ENCODE measurements at regions of chr6 and their contacts with region 1.

Region 1: GRCh38 chr6:112180095-112180820 is 74.1 kb downstream of the LAMA4 start:
- DNase-seq: peak; percentile 92
- ATAC-seq: peak; percentile 66; the same call in 1 of the 2 replicates
- H3K4me3 ChIP-seq: no peak overlapping the region
- H3K27ac ChIP-seq: no peak overlapping the region
- H3K4me1 ChIP-seq: peaks cover 3% of the 10 kb centered on the region; the same call in 1 of the 2 replicates
- H3K27me3 ChIP-seq: no peaks in the 10 kb centered on the region
- CTCF ChIP-seq: peak; percentile 79
- POLR2A ChIP-seq: no peak
- RAD21 ChIP-seq: peak; percentile 91

Region 2: DNA sequence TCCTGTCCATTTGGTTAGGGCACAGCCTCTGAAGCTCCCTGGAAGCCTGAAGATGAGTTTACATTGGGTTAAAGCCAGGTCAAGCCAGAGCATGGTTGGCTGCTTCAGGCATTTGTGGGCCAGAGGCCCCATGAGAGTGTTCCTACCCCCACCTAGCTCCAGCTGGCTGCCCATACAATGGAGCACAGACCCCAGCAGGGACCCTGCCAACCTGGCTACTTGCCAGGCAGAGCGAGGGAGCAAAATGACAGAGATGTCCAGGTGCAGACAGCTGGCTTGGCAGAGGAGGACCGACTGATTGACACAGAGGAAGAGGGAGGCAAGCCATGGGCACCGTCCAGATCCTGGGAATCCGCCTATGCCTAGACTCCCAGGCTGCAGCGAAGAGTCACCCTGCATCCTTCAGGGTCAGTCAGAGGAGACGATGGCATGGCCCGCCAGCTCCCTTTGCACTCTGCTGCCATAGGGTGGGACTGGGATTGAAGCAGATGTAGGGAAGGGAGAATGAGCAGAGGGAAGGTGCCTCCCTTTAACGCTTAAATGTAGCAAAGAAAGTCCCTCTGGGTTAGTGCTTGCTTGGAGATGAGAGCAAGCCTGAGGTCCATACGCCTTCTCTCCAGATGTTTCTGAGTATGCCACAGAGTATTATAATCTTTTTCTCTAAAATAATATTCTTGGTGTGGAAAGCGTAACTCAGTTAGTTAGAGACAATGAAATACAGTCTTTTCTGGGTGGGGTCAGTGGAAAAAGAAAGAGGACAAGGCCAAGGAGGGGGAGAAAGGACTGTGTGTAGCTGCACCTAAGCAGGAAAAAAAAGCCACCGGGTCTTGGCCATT is 229.4 kb before region 1 on chr6:
- CTCF ChIA-PET with region 1: no interaction called
- POLR2A ChIA-PET with region 1: no interaction called
- dilution Hi-C with region 1: no loop called
- in situ Hi-C with region 1: no loop called
- intact Hi-C with region 1: no loop called
- DNase-seq: peak; percentile 37
- ATAC-seq: peak; percentile 91
- H3K4me3 ChIP-seq: no peak overlapping the region
- H3K27ac ChIP-seq: no peak overlapping the region
- H3K4me1 ChIP-seq: peaks cover 4% of the 10 kb centered on the region
- H3K27me3 ChIP-seq: peaks cover 26% of the 10 kb centered on the region
- CTCF ChIP-seq: no peak
- POLR2A ChIP-seq: no peak
- RAD21 ChIP-seq: no peak

Region 3: DNA sequence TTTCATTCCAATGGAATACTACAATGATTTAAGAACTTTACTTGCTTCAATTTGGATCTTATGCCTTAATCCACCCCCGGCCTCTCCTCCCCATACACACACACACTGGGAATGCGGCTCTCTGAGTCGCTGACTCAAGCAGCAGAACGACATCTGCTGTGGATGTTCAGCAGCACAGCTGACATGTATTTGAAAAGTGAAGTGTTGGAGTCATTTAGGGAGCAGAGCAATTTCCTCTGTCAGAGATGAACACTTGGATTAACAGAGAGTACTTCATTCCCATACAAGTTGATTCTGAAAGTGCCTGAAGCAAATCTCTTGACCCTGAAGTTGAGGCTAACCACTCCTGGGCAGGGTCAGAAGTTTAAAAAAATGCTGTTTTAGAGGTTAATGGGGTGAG is 102.0 kb after region 1 on chr6:
- CTCF ChIA-PET with region 1: interaction called, 12 read pairs
- POLR2A ChIA-PET with region 1: no interaction called
- dilution Hi-C with region 1: no loop called
- in situ Hi-C with region 1: no loop called
- intact Hi-C with region 1: no loop called
- DNase-seq: peak; percentile 97
- ATAC-seq: peak; percentile 97
- H3K4me3 ChIP-seq: no peak overlapping the region
- H3K27ac ChIP-seq: no peak overlapping the region
- H3K4me1 ChIP-seq: peaks cover 10% of the 10 kb centered on the region
- H3K27me3 ChIP-seq: no peaks in the 10 kb centered on the region
- CTCF ChIP-seq: peak; percentile 54
- POLR2A ChIP-seq: no peak
- RAD21 ChIP-seq: peak; percentile 68

Region 4: GRCh38 chr6:112296122-112296521 is 115.9 kb after region 1 on chr6:
- CTCF ChIA-PET with region 1: interaction called, 16 read pairs
- POLR2A ChIA-PET with region 1: interaction called, 3 read pairs
- dilution Hi-C with region 1: no loop called
- in situ Hi-C with region 1: no loop called
- intact Hi-C with region 1: loop called (anchors 5 kb)
- DNase-seq: peak; percentile 67
- ATAC-seq: peak; percentile 13
- H3K4me3 ChIP-seq: no peak overlapping the region
- H3K27ac ChIP-seq: no peak overlapping the region
- H3K4me1 ChIP-seq: peaks cover 29% of the 10 kb centered on the region
- H3K27me3 ChIP-seq: no peaks in the 10 kb centered on the region
- CTCF ChIP-seq: peak; percentile 65
- POLR2A ChIP-seq: no peak
- RAD21 ChIP-seq: peak; percentile 57

Region 5: DNA sequence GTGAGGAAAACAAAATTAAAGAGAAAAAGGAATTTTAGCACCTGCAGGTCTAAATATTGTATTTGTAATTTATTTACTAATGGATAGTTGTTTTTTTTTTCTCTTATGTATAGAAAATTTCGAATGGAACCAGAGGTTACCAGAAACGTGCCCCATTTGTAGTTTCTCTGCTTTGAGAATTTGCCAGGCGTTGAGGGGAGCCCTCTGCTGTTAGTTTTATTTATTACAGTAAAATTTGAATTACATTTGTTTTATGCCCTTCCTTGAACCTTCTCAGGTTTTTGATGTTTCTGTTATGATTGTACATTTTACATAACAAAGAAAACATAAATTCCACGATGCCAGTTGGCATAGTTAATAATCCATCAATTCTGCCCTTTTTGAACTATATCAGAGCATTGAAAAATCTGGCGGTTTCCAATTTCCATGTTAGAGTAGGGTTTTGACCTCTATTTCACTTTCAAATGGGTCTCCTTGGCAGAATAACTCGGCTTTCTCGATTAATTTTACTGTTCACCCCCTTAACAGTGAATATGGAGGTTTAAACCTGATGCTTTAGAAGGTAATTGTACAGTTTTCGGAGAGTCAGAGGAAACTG is 131.8 kb after region 1 on chr6:
- CTCF ChIA-PET with region 1: interaction called, 15 read pairs
- POLR2A ChIA-PET with region 1: no interaction called
- dilution Hi-C with region 1: no loop called
- in situ Hi-C with region 1: loop called (anchors 5 kb)
- intact Hi-C with region 1: loop called (anchors 1 kb)
- DNase-seq: peak; percentile 38
- ATAC-seq: peak; percentile 49; the same call in 1 of the 2 replicates
- H3K4me3 ChIP-seq: no peak overlapping the region
- H3K27ac ChIP-seq: no peak overlapping the region
- H3K4me1 ChIP-seq: peaks cover 5% of the 10 kb centered on the region; the same call in 1 of the 2 replicates
- H3K27me3 ChIP-seq: no peaks in the 10 kb centered on the region
- CTCF ChIP-seq: peak; percentile 73
- POLR2A ChIP-seq: no peak
- RAD21 ChIP-seq: peak; percentile 87

Region 6: GRCh38 chr6:112372226-112372806 is 192.1 kb after region 1 on chr6:
- CTCF ChIA-PET with region 1: interaction called, 5 read pairs
- POLR2A ChIA-PET with region 1: no interaction called
- dilution Hi-C with region 1: no loop called
- in situ Hi-C with region 1: no loop called
- intact Hi-C with region 1: loop called (anchors 1 kb)
- DNase-seq: peak; percentile 46
- ATAC-seq: peak; percentile 93
- H3K4me3 ChIP-seq: no peak overlapping the region
- H3K27ac ChIP-seq: no peak overlapping the region
- H3K4me1 ChIP-seq: no peaks in the 10 kb centered on the region
- H3K27me3 ChIP-seq: peaks cover 11% of the 10 kb centered on the region
- CTCF ChIP-seq: peak; percentile 63
- POLR2A ChIP-seq: no peak
- RAD21 ChIP-seq: peak; percentile 63

Region 7: GRCh38 chr6:113909234-113909856 is 1729.1 kb after region 1 on chr6:
- CTCF ChIA-PET with region 1: no interaction called
- POLR2A ChIA-PET with region 1: no interaction called
- dilution Hi-C with region 1: no loop called
- in situ Hi-C with region 1: loop called (anchors 25 kb)
- intact Hi-C with region 1: no loop called
- DNase-seq: peak; percentile 79
- ATAC-seq: peak; percentile 59
- H3K4me3 ChIP-seq: no peak overlapping the region
- H3K27ac ChIP-seq: no peak overlapping the region
- H3K4me1 ChIP-seq: peaks cover 2% of the 10 kb centered on the region
- H3K27me3 ChIP-seq: no peaks in the 10 kb centered on the region
- CTCF ChIP-seq: peak; percentile 76
- POLR2A ChIP-seq: no peak
- RAD21 ChIP-seq: peak; percentile 83

Measured in IMR-90 (cell line).